Activated T-helper 1 cell treated with anti-CD3 and anti-CD28 coated beads, Interleukin-12 subunit alpha, Interleukin-12 subunit beta, Interleukin-2, Interleukin-4 antibody, amounts not matched to agents 30 ng/mL and 10 ng/mL and 1 ng/mL, durations not matched to agents 14 hours and 24 hours and 36 hours (primary cell): ENCODE measurements at regions of chr7 and their contacts with region 1.

Region 1: GRCh38 chr7:106285051-106285854 is 470 bp upstream of the NAMPT start:
- DNase-seq: peak; percentile 96
- H3K4me3 Mint-ChIP-seq: peak overlapping the region; percentile 95
- H3K27ac Mint-ChIP-seq: peak overlapping the region; percentile 99
- H3K4me1 Mint-ChIP-seq: peaks cover 53% of the 10 kb centered on the region
- H3K27me3 Mint-ChIP-seq: peaks cover 2% of the 10 kb centered on the region

Region 2: DNA sequence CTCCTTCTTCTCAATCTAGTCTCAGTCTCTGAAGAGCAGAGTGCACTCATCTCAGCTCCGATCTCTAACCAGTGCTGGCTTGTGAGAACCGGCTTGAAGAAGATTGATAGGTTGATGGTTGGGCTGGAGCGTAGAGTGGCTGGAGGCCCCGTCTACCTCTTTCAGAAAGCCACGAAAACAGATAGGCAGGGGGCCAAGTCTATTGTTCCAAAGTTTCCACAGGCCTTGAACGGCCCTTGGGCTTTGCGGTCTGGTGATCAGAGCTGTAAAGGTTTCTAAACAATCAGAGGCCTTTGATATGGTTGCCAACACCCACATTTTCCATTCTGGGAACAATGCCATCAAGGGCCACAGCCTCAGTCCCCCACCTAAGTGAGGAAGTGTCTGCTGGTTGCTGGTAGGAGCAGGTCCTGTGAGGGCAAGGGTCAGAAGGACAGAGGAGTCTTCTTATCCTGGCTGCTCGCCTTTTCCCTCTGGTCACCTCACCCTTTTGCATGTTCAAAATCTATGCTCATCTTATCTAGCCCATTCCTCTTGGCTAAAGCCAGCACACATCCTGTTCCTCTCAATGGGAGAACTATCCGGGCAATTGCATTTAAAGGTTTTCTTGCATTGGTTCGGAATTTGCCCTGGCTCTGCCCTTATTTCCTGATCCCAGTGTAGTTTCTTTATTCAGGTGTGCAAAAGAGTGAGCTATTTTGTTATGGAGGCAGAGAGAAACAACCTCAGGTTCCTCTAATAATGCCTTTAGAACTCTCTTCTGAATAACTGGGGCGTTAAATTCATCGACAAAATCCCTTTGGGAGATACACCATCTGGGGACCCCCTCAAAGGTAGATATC is 1341.5 kb before region 1 on chr7:
- intact Hi-C with region 1: loop called (anchors 2 kb)
- DNase-seq: peak; percentile 70
- H3K4me3 Mint-ChIP-seq: peak overlapping the region; percentile 96
- H3K27ac Mint-ChIP-seq: peak overlapping the region; percentile 100
- H3K4me1 Mint-ChIP-seq: peaks cover 72% of the 10 kb centered on the region
- H3K27me3 Mint-ChIP-seq: peaks cover 2% of the 10 kb centered on the region

Region 3: GRCh38 chr7:106176414-106177299 is 108.6 kb before region 1 on chr7:
- intact Hi-C with region 1: loop called (anchors 2 kb)
- DNase-seq: peak; percentile 54
- H3K4me3 Mint-ChIP-seq: no peak overlapping the region
- H3K27ac Mint-ChIP-seq: no peak overlapping the region
- H3K4me1 Mint-ChIP-seq: peaks cover 5% of the 10 kb centered on the region
- H3K27me3 Mint-ChIP-seq: peaks cover 11% of the 10 kb centered on the region

Region 4: DNA sequence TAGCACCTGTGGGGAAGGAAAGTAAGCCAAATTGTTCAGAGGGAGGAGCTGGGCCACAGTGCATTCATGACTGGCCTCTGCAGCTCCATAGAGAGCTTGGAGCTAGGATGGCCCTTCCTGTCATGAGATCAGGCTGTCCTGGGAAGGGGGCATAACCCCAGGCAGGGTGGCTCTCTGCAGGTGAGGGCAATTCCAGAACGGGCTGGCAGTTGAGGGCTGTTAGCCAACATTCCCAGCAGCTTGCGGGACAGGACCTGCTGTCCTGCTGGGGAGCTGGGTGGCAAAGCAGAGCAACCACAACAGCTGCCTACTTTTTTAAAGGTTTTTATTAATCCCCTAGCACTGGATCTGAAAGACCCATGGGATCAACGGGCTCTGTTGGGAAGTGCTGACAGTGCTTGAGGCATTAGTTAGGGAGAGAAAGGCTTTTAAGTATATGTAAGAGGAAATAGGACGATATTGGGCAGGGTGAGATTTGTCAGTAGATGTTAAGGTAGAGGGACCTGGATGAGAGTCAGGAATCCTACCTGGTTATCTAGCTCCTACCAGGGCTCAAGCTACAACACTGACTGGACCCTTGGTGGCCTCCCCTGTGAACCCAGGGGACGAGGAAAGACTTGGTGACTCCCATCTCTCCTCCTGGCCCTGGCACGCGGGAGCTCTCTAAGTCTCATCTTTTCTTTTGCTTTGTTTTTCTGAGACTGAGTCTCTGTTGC is 78.3 kb before region 1 on chr7:
- intact Hi-C with region 1: no loop called
- DNase-seq: no peak
- H3K4me3 Mint-ChIP-seq: no peak overlapping the region
- H3K27ac Mint-ChIP-seq: no peak overlapping the region
- H3K4me1 Mint-ChIP-seq: peaks cover 6% of the 10 kb centered on the region
- H3K27me3 Mint-ChIP-seq: peaks cover 17% of the 10 kb centered on the region

Region 5: DNA sequence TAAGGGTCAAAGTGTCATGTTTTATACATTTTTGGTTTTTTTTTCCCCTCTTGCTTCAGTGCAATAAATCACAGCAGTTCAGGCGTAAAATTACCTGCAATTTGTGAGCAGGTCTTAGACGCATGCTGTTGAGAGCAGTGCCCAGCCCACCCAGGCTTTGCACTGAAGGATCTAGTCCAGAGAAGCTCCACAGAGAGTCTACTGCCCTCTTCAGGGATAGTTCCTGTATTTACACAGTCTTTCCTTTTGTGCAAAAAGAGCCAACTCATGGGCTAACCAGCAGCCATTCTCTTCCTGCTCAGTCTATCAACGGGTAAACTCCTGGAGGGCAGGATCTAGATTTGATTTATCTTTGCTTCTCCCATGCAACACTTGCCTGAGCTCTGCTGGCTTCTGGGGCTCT is 81.8 kb after region 1 on chr7:
- intact Hi-C with region 1: loop called (anchors 1 kb)
- DNase-seq: no peak
- H3K4me3 Mint-ChIP-seq: no peak overlapping the region
- H3K27ac Mint-ChIP-seq: peak overlapping the region; percentile 35
- H3K4me1 Mint-ChIP-seq: peaks cover 36% of the 10 kb centered on the region
- H3K27me3 Mint-ChIP-seq: no peaks in the 10 kb centered on the region

Region 6: GRCh38 chr7:106425017-106425719 is 139.9 kb after region 1 on chr7:
- intact Hi-C with region 1: loop called (anchors 1 kb)
- DNase-seq: peak; percentile 67
- H3K4me3 Mint-ChIP-seq: peak overlapping the region; percentile 67
- H3K27ac Mint-ChIP-seq: peak overlapping the region; percentile 97
- H3K4me1 Mint-ChIP-seq: peaks cover 91% of the 10 kb centered on the region
- H3K27me3 Mint-ChIP-seq: no peaks in the 10 kb centered on the region

Region 7: GRCh38 chr7:106659963-106660861 is 375.0 kb after region 1 on chr7:
- intact Hi-C with region 1: loop called (anchors 2 kb)
- DNase-seq: peak; percentile 73
- H3K4me3 Mint-ChIP-seq: peak overlapping the region; percentile 94
- H3K27ac Mint-ChIP-seq: peak overlapping the region; percentile 92
- H3K4me1 Mint-ChIP-seq: peaks cover 32% of the 10 kb centered on the region
- H3K27me3 Mint-ChIP-seq: peaks cover 3% of the 10 kb centered on the region

Region 8: DNA sequence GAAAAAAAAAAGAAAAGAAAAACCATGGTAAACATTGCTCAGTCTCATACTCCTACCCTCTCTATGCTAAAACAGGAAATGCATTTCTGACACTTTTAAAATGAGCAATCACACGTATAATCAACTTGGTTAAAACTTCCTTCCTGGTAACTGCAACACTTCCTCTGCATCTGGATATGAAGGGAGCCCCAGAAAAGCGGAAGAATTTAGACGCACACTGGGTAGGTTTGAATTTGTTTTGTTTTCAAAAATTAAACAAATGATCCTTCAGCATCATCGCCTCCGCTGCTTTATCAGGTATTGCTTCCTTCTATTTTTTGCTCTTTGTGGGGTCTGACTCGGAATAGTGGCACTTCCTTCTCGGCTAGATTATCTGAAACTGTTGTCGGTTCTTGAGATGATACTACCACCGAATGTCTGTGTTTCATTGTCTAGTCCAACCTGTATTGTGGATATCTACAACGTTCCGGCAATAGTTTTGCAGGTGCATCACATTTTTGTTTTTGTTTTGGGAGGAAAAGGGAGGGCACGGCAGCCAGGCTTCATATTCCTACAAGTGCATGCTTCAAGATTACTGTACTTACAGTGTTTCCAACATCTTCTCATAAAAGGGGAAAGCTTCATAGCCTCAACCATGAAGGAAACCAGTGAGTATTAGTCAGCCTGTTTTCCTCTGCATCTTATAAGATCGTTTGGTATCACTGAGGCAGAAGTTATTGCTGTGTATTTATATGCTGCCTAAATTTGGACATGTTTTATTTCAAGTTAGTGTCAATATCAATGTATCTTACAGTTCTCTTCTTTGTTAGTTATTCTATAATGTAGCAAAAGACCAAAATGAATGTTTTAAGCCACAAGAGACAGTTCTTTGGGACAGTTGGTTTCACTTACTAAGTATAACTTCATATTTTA is 580.1 kb after region 1 on chr7 and contains the start of gene PIK3CG:
- intact Hi-C with region 1: loop called (anchors 2 kb)
- DNase-seq: peak; percentile 22
- H3K4me3 Mint-ChIP-seq: peak within 1 kb of the TSS; percentile 96
- H3K27ac Mint-ChIP-seq: peak within 1 kb of the TSS; percentile 90
- H3K4me1 Mint-ChIP-seq: peaks cover 55% of the 10 kb centered on the region
- H3K27me3 Mint-ChIP-seq: no peaks in the 10 kb centered on the region
- total RNA-seq, gene PIK3CG: 38.7 and 39.3 TPM in 2 replicates